Activated naive CD4-positive, alpha-beta T cell treated with anti-CD3 and anti-CD28 coated beads for 36 hours (primary cell): ENCODE measurements at regions of chrX and their contacts with region 1.

Region 1: GRCh38 chrX:136767104-136767941 is 13.4 kb downstream of the ARHGEF6 start:
- DNase-seq: peak; percentile 50
- H3K4me3 Mint-ChIP-seq: peak overlapping the region; percentile 76
- H3K27ac Mint-ChIP-seq: peak overlapping the region; percentile 90
- H3K4me1 Mint-ChIP-seq: peaks cover 56% of the 10 kb centered on the region
- H3K27me3 Mint-ChIP-seq: no peaks in the 10 kb centered on the region

Region 2: DNA sequence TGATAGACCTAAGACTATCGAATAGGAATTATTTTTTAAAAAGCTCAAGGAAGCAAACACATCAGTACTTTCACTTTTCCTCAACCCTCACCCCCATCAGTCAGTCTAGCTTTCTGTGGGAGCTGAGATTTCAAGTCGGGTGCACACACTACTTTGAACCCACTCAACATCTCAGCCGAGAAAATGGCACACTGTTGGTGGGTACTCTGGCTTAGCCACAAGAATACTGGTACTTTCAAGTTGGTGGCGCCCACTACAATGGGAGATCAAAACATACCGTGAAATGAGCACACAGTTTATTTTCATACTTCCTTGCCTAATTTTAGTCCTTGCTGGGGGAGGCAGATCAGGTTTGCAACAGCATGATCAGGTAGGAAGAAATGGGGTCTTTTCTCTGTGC is 109.2 kb before region 1 on chrX:
- CTCF ChIA-PET with region 1: no interaction called
- intact Hi-C with region 1: loop called (anchors 5 kb)
- DNase-seq: peak; percentile 34
- H3K4me3 Mint-ChIP-seq: peak overlapping the region; percentile 96
- H3K27ac Mint-ChIP-seq: peak overlapping the region; percentile 100
- H3K4me1 Mint-ChIP-seq: peaks cover 74% of the 10 kb centered on the region
- H3K27me3 Mint-ChIP-seq: no peaks in the 10 kb centered on the region

Region 3: DNA sequence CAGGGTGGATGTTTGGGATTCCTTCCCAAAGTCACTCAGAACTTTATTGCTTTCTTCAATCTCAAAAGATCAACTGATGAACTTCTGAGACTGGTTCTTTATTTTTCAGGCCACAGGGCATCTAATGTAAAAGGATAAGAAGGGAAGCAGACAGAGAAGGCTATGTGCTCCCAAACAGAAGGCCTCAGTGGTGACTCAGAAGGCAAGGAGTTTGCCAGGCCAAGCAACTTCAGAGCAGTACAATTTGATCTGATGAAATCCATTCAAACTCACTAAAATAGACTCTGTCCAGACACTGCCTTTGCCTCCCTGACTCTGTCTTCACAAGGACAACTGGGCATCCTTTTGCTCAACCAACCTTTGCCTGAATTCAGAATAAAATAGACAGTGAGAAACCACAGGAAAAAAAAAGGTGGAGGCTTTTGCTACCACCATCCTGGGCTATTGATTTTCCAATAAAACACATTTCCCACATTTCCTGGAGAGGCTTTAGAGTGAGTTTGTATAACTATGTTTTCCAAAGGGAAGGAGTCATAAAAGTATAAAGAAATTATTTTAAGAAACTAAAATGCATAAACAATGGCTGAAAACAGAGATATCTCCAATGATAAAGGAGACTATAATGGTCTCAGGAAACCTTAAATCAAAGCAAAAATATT is 41.7 kb before region 1 on chrX:
- CTCF ChIA-PET with region 1: no interaction called
- intact Hi-C with region 1: loop called (anchors 5 kb)
- DNase-seq: no peak
- H3K4me3 Mint-ChIP-seq: no peak overlapping the region
- H3K27ac Mint-ChIP-seq: no peak overlapping the region
- H3K4me1 Mint-ChIP-seq: peaks cover 44% of the 10 kb centered on the region
- H3K27me3 Mint-ChIP-seq: no peaks in the 10 kb centered on the region

Region 4: DNA sequence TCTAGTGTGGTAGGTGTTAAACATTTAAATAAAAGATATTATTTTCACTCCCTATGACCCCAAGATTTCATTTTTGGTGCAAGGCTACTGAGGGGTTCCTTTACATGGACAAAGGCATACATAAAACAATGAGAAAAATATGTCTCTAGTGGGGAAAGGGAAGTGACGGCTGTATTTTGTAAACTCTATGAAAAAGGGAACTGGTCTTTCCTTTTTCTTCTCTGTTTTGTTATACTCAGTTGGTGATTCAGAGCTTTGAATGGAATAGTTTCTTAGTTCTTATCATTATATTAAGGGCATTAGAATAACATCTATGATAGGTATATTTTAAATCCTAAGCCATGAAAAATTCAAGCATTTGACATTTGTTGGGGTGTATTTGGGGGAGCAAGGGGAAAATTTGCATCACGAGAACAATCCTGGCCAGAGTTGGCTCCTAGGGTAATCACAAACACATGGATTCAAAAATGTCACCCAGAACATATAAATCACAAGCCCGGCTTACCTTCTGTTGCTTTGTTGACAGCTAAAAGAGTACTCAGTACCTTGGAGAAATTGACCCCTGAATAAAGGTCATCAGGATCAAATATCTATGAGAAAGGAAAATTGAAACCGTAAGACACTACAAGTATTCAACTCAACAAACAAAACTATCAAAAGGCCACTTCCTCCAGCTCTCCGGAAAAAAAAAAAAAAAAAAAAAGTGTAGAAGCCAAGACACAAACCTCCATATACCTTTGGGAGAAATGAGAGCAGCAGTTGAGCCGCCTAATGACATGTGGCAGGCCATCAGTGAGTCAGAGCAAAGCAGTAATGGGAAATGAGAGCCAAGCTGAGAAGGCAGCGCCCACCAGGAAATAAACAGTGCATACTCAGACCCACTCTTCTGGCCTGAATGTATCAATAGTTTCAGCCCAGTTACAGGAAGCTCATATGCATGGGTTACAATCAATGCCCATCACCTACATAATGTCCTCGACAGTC is 20.0 kb before region 1 on chrX:
- CTCF ChIA-PET with region 1: interaction called, 3 read pairs
- intact Hi-C with region 1: loop called (anchors 1 kb)
- DNase-seq: peak; percentile 62
- H3K4me3 Mint-ChIP-seq: peak overlapping the region; percentile 46
- H3K27ac Mint-ChIP-seq: peak overlapping the region; percentile 91
- H3K4me1 Mint-ChIP-seq: peaks cover 90% of the 10 kb centered on the region
- H3K27me3 Mint-ChIP-seq: no peaks in the 10 kb centered on the region

Region 5: GRCh38 chrX:136880452-136881013 is 113.2 kb after region 1 on chrX and contains the start of gene RBMX:
- CTCF ChIA-PET with region 1: no interaction called
- intact Hi-C with region 1: loop called (anchors 1 kb)
- DNase-seq: peak; percentile 94
- H3K4me3 Mint-ChIP-seq: peak within 1 kb of the TSS; percentile 97
- H3K27ac Mint-ChIP-seq: peak within 1 kb of the TSS; percentile 98
- H3K4me1 Mint-ChIP-seq: peaks cover 24% of the 10 kb centered on the region
- H3K27me3 Mint-ChIP-seq: no peaks in the 10 kb centered on the region
- total RNA-seq, gene RBMX: 278 to 280 TPM